IMR-90 (cell line): ENCODE measurements at regions of chr1 and their contacts with region 1.

Region 1: GRCh38 chr1:192158181-192158580 is at the start of gene RGS18:
- DNase-seq: peak; percentile 84
- ATAC-seq: peak; percentile 49; the same call in 1 of the 2 replicates
- H3K4me3 ChIP-seq: peak within 1 kb of the TSS; percentile 16; the same call in 1 of the 2 replicates
- H3K27ac ChIP-seq: peak within 1 kb of the TSS; percentile 70
- H3K4me1 ChIP-seq: no peaks in the 10 kb centered on the region; the same call in 1 of the 2 replicates
- H3K27me3 ChIP-seq: no peaks in the 10 kb centered on the region
- CTCF ChIP-seq: no peak
- POLR2A ChIP-seq: no peak
- RAD21 ChIP-seq: no peak
- total RNA-seq, gene RGS18: under 0.01 and 0.18 TPM in 2 replicates

Region 2: DNA sequence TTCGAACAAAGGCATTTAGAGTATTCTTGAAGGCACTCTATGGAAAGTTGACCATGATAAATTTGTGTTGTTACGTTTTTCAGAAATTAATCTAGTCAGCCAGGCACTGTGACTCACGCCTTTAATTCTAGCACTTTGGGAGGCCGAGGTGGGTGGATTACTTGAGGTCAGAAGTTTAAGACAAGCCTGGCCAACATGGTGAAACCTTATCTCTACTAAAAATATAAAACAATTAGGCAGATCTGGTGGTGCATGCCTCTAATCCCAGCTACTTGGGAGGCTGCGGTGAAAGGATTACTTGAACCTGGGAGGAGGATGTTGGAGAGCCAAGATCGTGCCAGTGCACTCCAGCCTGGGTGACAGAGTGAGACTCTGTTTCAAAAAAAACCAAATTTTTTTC is 1549.9 kb before region 1 on chr1:
- CTCF ChIA-PET with region 1: no interaction called
- POLR2A ChIA-PET with region 1: interaction called, 17 read pairs
- dilution Hi-C with region 1: no loop called
- in situ Hi-C with region 1: no loop called
- intact Hi-C with region 1: no loop called
- DNase-seq: no peak
- ATAC-seq: no peak
- H3K4me3 ChIP-seq: no peak overlapping the region
- H3K27ac ChIP-seq: no peak overlapping the region
- H3K4me1 ChIP-seq: no peaks in the 10 kb centered on the region
- H3K27me3 ChIP-seq: no peaks in the 10 kb centered on the region
- CTCF ChIP-seq: no peak
- POLR2A ChIP-seq: no peak
- RAD21 ChIP-seq: no peak

Region 3: DNA sequence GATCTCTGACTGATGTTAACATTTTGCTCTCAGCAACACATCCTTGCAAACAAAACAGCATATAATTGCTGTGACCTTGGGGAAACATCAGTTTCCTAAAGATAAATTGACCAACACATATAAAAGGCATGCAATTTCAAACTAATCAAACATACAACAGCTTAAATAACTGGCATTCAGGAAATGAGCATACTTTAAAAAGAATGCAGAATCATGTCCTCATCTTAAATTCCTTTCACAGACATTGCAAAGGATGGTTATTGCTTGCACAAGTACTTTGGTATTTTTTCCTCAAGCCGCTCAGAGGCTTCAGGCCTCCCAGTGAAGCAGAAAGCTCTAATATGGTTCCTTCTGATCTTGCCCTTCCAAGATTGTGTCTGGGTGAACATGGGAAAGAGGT is 53.3 kb before region 1 on chr1:
- CTCF ChIA-PET with region 1: no interaction called
- POLR2A ChIA-PET with region 1: no interaction called
- dilution Hi-C with region 1: no loop called
- in situ Hi-C with region 1: no loop called
- intact Hi-C with region 1: loop called (anchors 5 kb)
- DNase-seq: peak; percentile 89
- ATAC-seq: peak; percentile 90
- H3K4me3 ChIP-seq: no peak overlapping the region
- H3K27ac ChIP-seq: peak overlapping the region; percentile 86
- H3K4me1 ChIP-seq: peaks cover 5% of the 10 kb centered on the region
- H3K27me3 ChIP-seq: no peaks in the 10 kb centered on the region
- CTCF ChIP-seq: no peak
- POLR2A ChIP-seq: no peak; the same call in 1 of the 2 replicates
- RAD21 ChIP-seq: 0 out of 2 replicates have a peak, but pooled peaks have one; percentile 7

Region 4: DNA sequence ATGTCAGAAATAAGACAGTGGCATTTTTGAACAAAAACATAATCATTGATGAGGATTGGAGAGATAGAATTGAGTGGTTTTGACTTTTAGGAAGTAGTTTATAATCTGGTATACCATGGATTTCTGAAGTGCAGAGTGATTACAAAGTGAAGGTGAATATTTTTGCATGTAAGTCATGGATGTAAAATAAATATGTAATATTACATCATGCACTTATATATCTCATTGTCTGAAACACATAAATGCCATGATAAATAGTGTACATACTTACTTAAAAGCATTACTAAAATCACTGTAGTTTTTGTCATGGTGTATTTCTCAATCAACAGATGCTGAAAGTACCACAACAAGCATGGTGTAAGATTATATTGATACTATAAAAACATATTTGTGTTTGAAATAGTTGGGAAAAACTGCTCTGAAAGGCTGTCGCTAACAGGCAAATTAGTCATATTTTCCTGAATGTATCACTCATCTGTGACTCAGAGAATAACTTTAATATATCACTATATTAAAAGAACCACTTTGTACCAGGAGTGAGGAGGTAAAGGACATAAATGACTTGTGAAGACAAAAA is 24.7 kb before region 1 on chr1:
- CTCF ChIA-PET with region 1: no interaction called
- POLR2A ChIA-PET with region 1: no interaction called
- dilution Hi-C with region 1: no loop called
- in situ Hi-C with region 1: no loop called
- intact Hi-C with region 1: loop called (anchors 1 kb)
- DNase-seq: peak; percentile 66
- ATAC-seq: peak; percentile 44
- H3K4me3 ChIP-seq: no peak overlapping the region
- H3K27ac ChIP-seq: peak overlapping the region; percentile 50; the same call in 1 of the 2 replicates
- H3K4me1 ChIP-seq: no peaks in the 10 kb centered on the region; the same call in none of the 2 replicates
- H3K27me3 ChIP-seq: no peaks in the 10 kb centered on the region
- CTCF ChIP-seq: no peak
- POLR2A ChIP-seq: no peak
- RAD21 ChIP-seq: no peak

Region 5: GRCh38 chr1:192201303-192201702 is 43.1 kb after region 1 on chr1:
- CTCF ChIA-PET with region 1: no interaction called
- POLR2A ChIA-PET with region 1: no interaction called
- dilution Hi-C with region 1: no loop called
- in situ Hi-C with region 1: no loop called
- intact Hi-C with region 1: no loop called
- DNase-seq: no peak
- ATAC-seq: no peak
- H3K4me3 ChIP-seq: no peak overlapping the region
- H3K27ac ChIP-seq: no peak overlapping the region
- H3K4me1 ChIP-seq: no peaks in the 10 kb centered on the region
- H3K27me3 ChIP-seq: no peaks in the 10 kb centered on the region
- CTCF ChIP-seq: no peak
- POLR2A ChIP-seq: no peak
- RAD21 ChIP-seq: no peak

Region 6: DNA sequence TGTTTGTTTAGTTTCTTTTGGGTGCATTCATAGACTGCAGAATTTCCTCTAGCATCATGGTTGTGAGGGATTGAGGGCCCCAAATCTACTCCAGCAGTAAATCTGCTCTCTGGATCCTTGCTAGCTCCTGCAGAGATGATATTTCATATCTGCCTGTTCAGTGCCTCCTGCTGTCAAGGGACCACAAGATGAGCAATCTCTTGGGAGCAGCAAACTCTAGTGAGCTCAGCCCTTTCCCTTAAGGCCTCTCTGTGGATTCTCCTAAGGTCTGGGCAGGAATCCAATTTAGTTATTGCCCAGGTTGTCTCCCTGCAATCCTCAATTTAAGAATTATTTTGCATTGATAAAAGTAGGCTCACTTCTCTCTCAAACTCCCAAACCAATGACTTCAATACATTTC is 76.9 kb after region 1 on chr1:
- CTCF ChIA-PET with region 1: no interaction called
- POLR2A ChIA-PET with region 1: no interaction called
- dilution Hi-C with region 1: no loop called
- in situ Hi-C with region 1: no loop called
- intact Hi-C with region 1: no loop called
- DNase-seq: peak; percentile 49
- ATAC-seq: no peak
- H3K4me3 ChIP-seq: no peak overlapping the region
- H3K27ac ChIP-seq: no peak overlapping the region
- H3K4me1 ChIP-seq: peaks cover 2% of the 10 kb centered on the region; the same call in 1 of the 2 replicates
- H3K27me3 ChIP-seq: no peaks in the 10 kb centered on the region
- CTCF ChIP-seq: no peak
- POLR2A ChIP-seq: no peak
- RAD21 ChIP-seq: no peak

Region 7: DNA sequence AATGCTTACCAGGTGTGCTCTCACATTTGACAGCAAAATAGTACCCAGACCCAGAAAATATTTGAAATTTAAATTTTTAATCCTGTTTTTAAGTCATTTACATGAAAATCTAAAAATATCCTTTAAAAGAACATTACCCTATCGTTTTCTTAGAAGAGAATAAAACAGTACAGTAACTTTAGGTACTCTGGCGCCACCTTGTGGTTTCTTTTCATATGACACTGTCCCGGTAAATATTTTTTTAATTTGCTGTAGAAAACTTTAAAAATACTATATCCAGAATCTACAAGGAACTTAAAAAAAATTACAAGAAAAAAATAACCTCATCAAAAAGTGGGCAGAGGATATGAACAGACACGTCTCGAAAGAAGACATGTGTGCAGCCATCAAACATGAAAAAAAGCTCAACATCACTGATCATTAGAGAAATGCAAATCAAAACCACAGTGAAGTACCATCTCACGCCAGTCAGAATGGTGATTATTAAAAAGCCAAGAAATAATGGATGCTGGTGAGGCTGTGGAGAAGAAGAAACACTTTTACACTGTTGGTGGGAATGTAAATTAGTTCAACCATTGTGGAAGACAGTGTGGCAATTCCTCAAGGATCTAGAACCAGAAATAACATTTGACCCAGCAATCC is 287.8 kb after region 1 on chr1:
- CTCF ChIA-PET with region 1: interaction called, 3 read pairs
- POLR2A ChIA-PET with region 1: no interaction called
- dilution Hi-C with region 1: no loop called
- in situ Hi-C with region 1: no loop called
- intact Hi-C with region 1: loop called (anchors 10 kb)
- DNase-seq: peak; percentile 60
- ATAC-seq: peak; percentile 69
- H3K4me3 ChIP-seq: no peak overlapping the region
- H3K27ac ChIP-seq: peak overlapping the region; percentile 40; the same call in 1 of the 2 replicates
- H3K4me1 ChIP-seq: peaks cover 10% of the 10 kb centered on the region
- H3K27me3 ChIP-seq: no peaks in the 10 kb centered on the region
- CTCF ChIP-seq: peak; percentile 87
- POLR2A ChIP-seq: no peak
- RAD21 ChIP-seq: peak; percentile 83

Region 8: DNA sequence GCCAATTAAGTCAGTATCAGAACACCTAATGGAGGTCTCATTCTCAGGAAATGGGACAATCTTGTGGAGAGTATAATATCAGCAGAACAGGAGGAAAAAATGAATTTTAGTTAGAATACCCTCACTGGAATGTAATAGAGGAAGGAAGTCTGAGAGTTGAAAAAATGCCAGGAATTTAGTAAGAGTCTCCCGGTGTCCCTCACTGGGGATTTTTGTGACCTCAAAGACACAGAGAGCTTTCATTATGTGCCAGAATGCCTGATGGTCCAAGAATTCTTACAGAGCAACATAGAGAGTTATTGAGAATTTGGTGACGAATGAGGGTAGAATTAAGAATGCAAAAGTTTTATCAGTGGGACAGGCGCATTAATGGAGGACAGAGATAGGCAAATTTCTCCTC is 1471.7 kb after region 1 on chr1:
- CTCF ChIA-PET with region 1: no interaction called
- POLR2A ChIA-PET with region 1: no interaction called
- dilution Hi-C with region 1: no loop called
- in situ Hi-C with region 1: no loop called
- intact Hi-C with region 1: no loop called
- DNase-seq: no peak
- ATAC-seq: no peak; the same call in 1 of the 2 replicates
- H3K4me3 ChIP-seq: no peak overlapping the region
- H3K27ac ChIP-seq: no peak overlapping the region
- H3K4me1 ChIP-seq: no peaks in the 10 kb centered on the region
- H3K27me3 ChIP-seq: no peaks in the 10 kb centered on the region
- CTCF ChIP-seq: no peak
- POLR2A ChIP-seq: no peak
- RAD21 ChIP-seq: no peak